Endothelial cell of umbilical vein (primary cell): ENCODE measurements at regions of chr14 and their contacts with region 1.

Region 1: DNA sequence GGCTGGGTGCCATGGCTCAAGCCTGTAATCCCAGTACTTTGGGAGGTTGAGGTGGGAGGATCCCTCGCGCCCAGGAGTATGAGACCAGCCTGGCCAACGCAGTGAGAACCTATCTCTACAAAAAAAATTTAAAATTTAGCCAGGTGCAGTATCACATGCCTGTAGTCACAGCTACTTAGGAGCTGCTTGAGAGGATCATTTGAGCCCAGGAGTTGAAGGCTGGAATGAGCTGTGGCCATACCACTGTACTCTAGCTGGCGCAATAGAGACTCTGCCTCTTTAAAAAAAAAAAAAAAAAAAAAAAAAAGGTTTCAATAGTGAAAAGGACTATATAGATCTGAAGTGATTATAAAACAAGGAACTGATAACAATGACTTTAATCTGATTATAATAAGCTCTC is 13.5 kb downstream of the PSMA3 start:
- DNase-seq: no peak
- H3K4me3 ChIP-seq: no peak overlapping the region
- H3K27ac ChIP-seq: no peak overlapping the region
- H3K4me1 ChIP-seq: no peaks in the 10 kb centered on the region
- H3K27me3 ChIP-seq: no peaks in the 10 kb centered on the region
- CTCF ChIP-seq: no peak
- POLR2A ChIP-seq: no peak

Region 2: GRCh38 chr14:58014778-58015177 is 243.4 kb before region 1 on chr14:
- CTCF ChIA-PET with region 1: no interaction called
- POLR2A ChIA-PET with region 1: no interaction called
- dilution Hi-C with region 1: no loop called
- intact Hi-C with region 1: no loop called
- DNase-seq: no peak
- H3K4me3 ChIP-seq: no peak overlapping the region
- H3K27ac ChIP-seq: no peak overlapping the region
- H3K4me1 ChIP-seq: no peaks in the 10 kb centered on the region
- H3K27me3 ChIP-seq: no peaks in the 10 kb centered on the region
- CTCF ChIP-seq: no peak
- POLR2A ChIP-seq: no peak

Region 3: GRCh38 chr14:58189176-58189575 is 69.0 kb before region 1 on chr14:
- CTCF ChIA-PET with region 1: no interaction called
- POLR2A ChIA-PET with region 1: interaction called, 11 read pairs
- dilution Hi-C with region 1: no loop called
- intact Hi-C with region 1: no loop called
- DNase-seq: no peak
- H3K4me3 ChIP-seq: no peak overlapping the region
- H3K27ac ChIP-seq: no peak overlapping the region
- H3K4me1 ChIP-seq: peaks cover 3% of the 10 kb centered on the region
- H3K27me3 ChIP-seq: peaks cover 8 to 23% of the 10 kb centered on the region in 2 experiments
- CTCF ChIP-seq: no peak
- POLR2A ChIP-seq: no peak

Region 4: GRCh38 chr14:58272588-58273372 is 14.6 kb after region 1 on chr14:
- CTCF ChIA-PET with region 1: interaction called, 6 read pairs
- POLR2A ChIA-PET with region 1: interaction called, 3 read pairs
- dilution Hi-C with region 1: no loop called
- intact Hi-C with region 1: loop called (anchors 2 kb)
- DNase-seq: peak; percentile 29
- H3K4me3 ChIP-seq: no peak overlapping the region
- H3K27ac ChIP-seq: no peak overlapping the region
- H3K4me1 ChIP-seq: peaks cover 6% of the 10 kb centered on the region
- H3K27me3 ChIP-seq: no peaks in the 10 kb centered on the region
- CTCF ChIP-seq: peak; percentile 7 to 10
- POLR2A ChIP-seq: no peak

Region 5: GRCh38 chr14:58292187-58292586 is 34.0 kb after region 1 on chr14:
- CTCF ChIA-PET with region 1: no interaction called
- POLR2A ChIA-PET with region 1: no interaction called
- dilution Hi-C with region 1: no loop called
- intact Hi-C with region 1: no loop called
- DNase-seq: no peak
- H3K4me3 ChIP-seq: no peak overlapping the region
- H3K27ac ChIP-seq: no peak overlapping the region
- H3K4me1 ChIP-seq: peaks cover 6% of the 10 kb centered on the region
- H3K27me3 ChIP-seq: no peaks in the 10 kb centered on the region
- CTCF ChIP-seq: no peak
- POLR2A ChIP-seq: no peak